Naive thymus-derived CD8-positive, alpha-beta T cell (primary cell): ENCODE measurements at regions of chr18 and their contacts with region 1.

Region 1: GRCh38 chr18:51197661-51198424 is at the start of gene MEX3C:
- DNase-seq: peak; percentile 93 to 100 (median 99)
- ATAC-seq: peak; percentile 79 to 84
- H3K4me3 Mint-ChIP-seq: peak within 1 kb of the TSS; percentile 83 to 98 (median 97)
- H3K27ac Mint-ChIP-seq: peak within 1 kb of the TSS; percentile 95 to 99 (median 97)
- H3K4me1 Mint-ChIP-seq: peaks cover 14 to 40% (median 30%) of the 10 kb centered on the region in 4 donors
- H3K27me3 Mint-ChIP-seq: no peaks in the 10 kb centered on the region
- polyA plus RNA-seq, gene MEX3C: 1.7 to 7.4 (median 6.9) TPM

Region 2: DNA sequence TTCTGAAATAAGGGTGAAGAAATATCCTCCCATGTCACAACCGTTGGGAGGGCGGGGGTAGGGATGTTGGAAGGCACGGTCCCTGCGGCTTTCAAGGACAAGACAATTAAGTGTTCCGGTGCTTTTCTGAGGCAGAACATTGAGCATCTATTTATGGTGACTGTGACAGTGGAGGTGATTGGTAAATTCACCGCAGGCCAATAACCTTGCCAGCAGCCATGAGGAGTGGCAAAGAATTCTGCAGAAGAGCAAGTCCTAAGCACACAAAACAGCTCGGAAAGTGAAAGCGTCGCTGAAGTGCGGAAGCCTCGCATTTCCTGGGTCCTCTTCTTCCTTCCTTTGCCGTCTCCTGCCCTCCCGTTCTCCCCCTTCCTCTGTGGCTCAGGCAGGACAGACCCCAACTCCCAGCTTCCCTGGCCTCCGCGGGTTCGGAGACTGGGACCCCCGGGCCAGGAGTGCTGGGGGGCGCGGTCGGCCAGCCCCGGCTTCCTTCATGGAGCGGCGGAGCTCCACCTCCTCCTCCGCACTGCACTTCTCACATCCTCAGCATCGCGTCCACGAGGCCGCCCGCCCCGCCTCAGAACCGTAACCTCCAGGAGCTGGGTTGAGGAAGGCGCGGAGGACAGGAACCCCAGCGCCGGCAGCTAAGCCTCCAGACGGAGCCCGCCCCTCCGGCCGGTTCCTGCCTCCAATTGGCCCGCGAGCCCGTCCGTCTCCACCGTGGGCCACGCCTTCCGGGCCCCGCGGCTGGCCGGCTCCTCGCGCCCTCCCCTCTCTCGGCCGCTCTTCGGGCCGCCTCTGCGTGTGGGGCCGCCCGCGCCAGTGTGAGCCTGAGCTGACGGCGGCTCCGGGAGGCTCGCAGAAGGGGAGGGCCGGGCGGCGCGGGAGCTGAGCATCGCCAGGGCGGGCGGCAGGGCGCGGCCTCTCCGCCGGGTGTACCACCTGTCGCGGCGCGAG is 319.2 kb before region 1 on chr18 and contains the start of gene ME2:
- POLR2A ChIA-PET with region 1: interaction called, 27 read pairs
- DNase-seq: peak; percentile 77 to 94 (median 88)
- ATAC-seq: peak; percentile 88 to 90
- H3K4me3 Mint-ChIP-seq: peak within 1 kb of the TSS; percentile 91 to 99 (median 98)
- H3K27ac Mint-ChIP-seq: peak within 1 kb of the TSS; percentile 95 to 99 (median 98)
- H3K4me1 Mint-ChIP-seq: peaks cover 14 to 38% (median 32%) of the 10 kb centered on the region in 4 donors
- H3K27me3 Mint-ChIP-seq: peaks cover 0 to 3% (median 0%) of the 10 kb centered on the region in 5 donors
- polyA plus RNA-seq, gene ME2: 39.0 to 52.3 (median 42.0) TPM

Region 3: DNA sequence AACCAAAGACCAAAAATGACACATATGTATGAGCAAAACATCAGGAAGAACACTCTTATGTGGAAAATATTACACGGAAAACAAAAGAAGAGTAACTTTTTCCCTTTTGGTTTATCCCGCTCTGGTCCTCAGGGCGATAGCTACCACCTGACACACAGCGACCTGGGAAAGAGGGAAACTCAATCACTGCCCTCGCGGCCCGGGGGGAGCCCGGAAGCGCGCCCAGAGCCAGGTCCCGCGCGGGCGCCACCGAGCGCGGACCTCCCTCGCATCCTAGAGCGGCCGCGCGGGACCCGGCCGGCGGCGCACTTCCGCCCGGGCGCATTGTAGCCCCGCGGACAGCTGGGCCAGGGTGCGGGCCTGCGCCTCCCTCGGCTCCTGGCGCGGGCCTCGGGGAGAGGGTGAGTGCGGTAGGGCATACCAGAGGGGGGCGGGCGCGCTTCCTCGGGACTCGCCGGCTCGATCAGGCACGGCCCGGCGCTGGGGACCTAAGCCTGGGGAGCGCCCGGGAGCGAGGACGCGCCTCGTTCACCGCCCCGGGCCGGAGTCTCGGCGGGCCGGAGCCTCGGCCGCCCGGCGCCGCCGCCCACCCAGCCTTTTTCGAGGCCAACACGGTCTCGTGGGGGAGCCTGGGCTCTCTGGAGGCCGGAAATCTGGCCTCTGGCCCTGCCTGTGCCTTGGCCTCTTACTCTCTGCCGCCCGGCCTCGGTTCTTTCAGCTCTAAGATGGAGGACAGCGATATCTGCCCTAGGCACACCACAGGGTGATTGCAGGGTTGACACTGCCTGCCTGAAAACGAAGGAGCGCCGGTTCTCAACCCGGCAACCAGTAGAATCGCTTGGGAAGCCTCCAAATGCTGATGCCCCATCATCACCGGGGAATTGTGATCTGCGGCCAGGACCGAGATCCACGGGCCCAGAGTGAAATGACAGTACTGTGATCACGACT is 229.9 kb before region 1 on chr18 and contains the start of gene ELAC1:
- POLR2A ChIA-PET with region 1: interaction called, 19 read pairs
- DNase-seq: peak; percentile 32 to 75 (median 62)
- ATAC-seq: peak; percentile 87 to 89
- H3K4me3 Mint-ChIP-seq: peak within 1 kb of the TSS; percentile 72 to 97 (median 94)
- H3K27ac Mint-ChIP-seq: peak within 1 kb of the TSS; percentile 61 to 98 (median 96)
- H3K4me1 Mint-ChIP-seq: peaks cover 16 to 32% (median 25%) of the 10 kb centered on the region in 4 donors
- H3K27me3 Mint-ChIP-seq: no peaks in the 10 kb centered on the region
- polyA plus RNA-seq, gene ELAC1: 12.6 to 19.9 (median 15.0) TPM

Region 4: DNA sequence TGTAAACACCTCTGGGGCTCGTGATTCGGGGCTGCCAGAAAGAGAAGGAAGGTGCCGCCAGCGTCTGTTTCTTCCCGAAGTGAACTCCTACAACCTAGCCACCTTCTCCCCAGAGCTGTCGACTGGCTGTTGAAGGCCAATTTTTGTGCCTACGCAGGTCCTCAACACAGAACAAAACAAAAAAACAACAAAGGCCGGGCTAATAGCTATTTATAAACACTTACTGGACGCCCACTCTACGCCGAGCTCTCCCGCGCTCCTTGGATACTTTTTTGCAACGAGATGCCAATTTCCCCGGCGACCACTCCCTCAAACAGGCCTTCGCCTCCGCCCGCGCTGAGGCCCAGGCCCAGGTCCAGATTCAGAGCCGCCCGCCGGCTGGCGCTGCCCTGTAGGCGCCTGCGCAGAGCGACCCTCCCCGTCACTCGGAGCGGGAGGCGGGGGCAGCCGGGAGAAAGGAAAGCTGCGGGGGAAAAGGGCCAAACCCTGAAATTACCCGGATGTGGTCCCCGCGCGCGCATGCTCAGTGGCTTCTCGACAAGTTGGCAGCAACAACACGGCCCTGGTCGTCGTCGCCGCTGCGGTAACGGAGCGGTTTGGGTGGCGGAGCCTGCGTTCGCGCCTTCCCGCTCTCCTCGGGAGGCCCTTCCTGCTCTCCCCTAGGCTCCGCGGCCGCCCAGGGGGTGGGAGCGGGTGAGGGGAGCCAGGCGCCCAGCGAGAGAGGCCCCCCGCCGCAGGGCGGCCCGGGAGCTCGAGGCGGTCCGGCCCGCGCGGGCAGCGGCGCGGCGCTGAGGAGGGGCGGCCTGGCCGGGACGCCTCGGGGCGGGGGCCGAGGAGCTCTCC is 167.9 kb before region 1 on chr18 and contains the start of gene SMAD4:
- POLR2A ChIA-PET with region 1: interaction called, 45 read pairs
- DNase-seq: peak; percentile 94 to 99 (median 98)
- ATAC-seq: peak; percentile 82 to 83
- H3K4me3 Mint-ChIP-seq: peak within 1 kb of the TSS; percentile 95 to 99 (median 96)
- H3K27ac Mint-ChIP-seq: peak within 1 kb of the TSS; percentile 96 to 99 (median 98)
- H3K4me1 Mint-ChIP-seq: peaks cover 36 to 69% (median 58%) of the 10 kb centered on the region in 4 donors
- H3K27me3 Mint-ChIP-seq: no peaks in the 10 kb centered on the region
- polyA plus RNA-seq, gene SMAD4: 46.0 to 69.2 (median 48.6) TPM

Region 5: DNA sequence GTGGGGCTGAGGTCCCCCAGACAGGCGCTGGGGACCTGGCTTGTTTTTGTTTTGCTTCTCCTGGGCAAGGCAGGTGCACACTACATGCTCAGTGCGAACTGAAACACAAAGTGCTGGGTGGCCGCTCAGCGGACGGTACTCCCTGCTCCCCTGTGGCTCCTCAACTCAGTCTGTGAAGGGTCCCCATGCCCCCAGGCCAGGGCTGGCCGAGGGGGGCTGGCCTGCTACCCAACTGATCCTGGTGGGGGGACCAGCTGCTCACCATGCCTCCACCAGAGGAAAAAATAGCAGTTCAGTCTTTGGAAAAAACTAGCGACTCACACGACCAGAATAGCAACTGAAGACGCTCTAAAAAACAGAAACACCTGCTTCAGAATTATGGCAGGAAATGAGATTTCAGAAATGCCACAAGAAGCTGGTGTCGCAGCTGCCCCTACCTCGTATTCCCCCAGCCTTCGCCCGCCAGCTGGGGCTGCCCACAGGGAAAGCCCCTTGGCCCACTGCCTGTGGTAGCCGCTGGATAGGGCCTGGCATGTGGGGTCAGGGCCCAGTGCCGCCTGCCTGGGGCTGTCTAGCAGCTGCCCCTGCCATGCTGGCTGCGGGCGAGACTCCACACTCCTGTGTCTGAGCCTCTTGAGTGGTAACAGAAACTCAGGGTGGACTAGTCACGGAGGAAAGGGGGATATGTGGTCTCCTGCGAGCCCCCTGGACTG is 44.0 kb before region 1 on chr18:
- POLR2A ChIA-PET with region 1: interaction called, 80 read pairs
- DNase-seq: peak; percentile 19 to 65 (median 42)
- ATAC-seq: peak; percentile 58 to 61
- H3K4me3 Mint-ChIP-seq: peak overlapping the region; percentile 75 to 91 (median 86)
- H3K27ac Mint-ChIP-seq: peak overlapping the region; percentile 89 to 95 (median 93)
- H3K4me1 Mint-ChIP-seq: peaks cover 22 to 51% (median 32%) of the 10 kb centered on the region in 4 donors
- H3K27me3 Mint-ChIP-seq: no peaks in the 10 kb centered on the region